Activated naive CD4-positive, alpha-beta T cell treated with anti-CD3 and anti-CD28 coated beads for 36 hours (primary cell): ENCODE measurements at regions of chr7 and their contacts with region 1.

Region 1: GRCh38 chr7:129952653-129953560 is at the start of gene UBE2H:
- DNase-seq: peak; percentile 91
- H3K4me3 Mint-ChIP-seq: peak within 1 kb of the TSS; percentile 99
- H3K27ac Mint-ChIP-seq: peak within 1 kb of the TSS; percentile 96
- H3K4me1 Mint-ChIP-seq: peaks cover 4% of the 10 kb centered on the region
- H3K27me3 Mint-ChIP-seq: no peaks in the 10 kb centered on the region
- total RNA-seq, gene UBE2H: 33.4 to 37.6 TPM

Region 2: DNA sequence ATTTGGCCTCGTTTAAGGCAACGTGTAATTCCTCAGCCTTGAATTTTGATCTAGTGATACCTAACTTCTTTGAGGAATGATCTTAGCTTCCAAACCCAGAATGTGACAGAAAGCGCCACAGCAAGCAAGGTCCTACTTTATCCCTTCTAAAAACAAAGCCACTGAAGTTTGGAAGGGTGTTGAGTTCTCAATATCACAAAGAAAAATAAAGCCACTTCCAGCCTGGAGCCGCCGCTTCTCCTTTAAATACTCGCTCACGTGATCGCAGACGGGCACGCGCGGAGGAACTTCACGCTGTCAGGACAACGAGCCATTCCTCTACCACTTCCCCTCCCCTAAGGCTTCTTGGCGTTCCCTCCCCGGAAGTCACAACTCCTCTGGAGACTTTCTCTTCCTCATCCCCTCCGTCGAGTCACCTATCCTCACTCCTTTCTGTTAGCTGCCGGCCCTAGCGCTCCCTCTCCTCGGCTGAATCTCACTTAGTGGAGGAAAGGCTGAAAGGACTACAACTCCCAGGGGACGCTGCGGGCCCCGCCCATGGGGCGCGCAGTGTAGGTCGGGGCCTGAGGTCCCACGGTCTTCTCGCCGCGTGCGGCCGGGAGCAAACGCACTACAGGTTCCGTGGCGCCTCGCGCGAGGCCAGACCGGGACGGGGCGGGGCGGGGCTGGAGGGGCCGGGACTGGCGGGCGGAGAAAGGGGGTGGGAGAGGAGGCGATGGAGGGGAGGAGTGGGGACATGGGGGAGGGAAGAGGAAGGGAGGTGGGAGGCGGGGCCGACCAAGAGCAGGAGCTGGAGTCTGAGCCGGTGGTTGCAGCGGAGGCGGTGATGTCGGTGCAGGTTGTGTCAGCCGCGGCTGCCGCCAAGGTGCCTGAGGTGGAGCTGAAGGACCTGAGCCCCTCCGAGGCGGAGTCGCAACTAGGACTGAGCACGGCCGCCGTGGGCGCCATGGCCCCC is 728.4 kb before region 1 on chr7 and contains the start of gene AHCYL2:
- CTCF ChIA-PET with region 1: no interaction called
- intact Hi-C with region 1: loop called (anchors 1 kb)
- DNase-seq: peak; percentile 99
- H3K4me3 Mint-ChIP-seq: peak within 1 kb of the TSS; percentile 88
- H3K27ac Mint-ChIP-seq: peak within 1 kb of the TSS; percentile 90
- H3K4me1 Mint-ChIP-seq: peaks cover 31% of the 10 kb centered on the region
- H3K27me3 Mint-ChIP-seq: no peaks in the 10 kb centered on the region
- total RNA-seq, gene AHCYL2: 29.1 to 30.4 TPM

Region 3: DNA sequence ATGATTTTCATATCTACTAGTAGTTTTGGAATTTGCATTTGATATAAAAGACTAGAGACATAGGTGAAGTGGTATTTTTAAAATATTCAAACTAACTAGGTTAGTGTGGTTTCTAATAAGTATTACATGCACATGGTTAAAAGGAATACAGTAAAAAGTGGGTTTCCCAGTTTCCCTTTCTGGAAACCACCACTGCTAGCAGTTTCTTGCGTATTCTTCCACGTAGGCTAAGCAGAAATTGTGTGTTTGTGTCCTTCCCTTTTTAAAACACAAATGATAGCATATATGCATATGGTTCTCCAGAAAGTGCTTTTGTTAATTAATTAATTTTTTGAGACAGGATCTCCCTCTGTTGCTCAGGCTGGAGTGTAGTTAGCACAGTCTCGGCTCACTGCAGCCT is 326.0 kb before region 1 on chr7:
- CTCF ChIA-PET with region 1: no interaction called
- intact Hi-C with region 1: no loop called
- DNase-seq: no peak
- H3K4me3 Mint-ChIP-seq: no peak overlapping the region
- H3K27ac Mint-ChIP-seq: no peak overlapping the region
- H3K4me1 Mint-ChIP-seq: peaks cover 42% of the 10 kb centered on the region
- H3K27me3 Mint-ChIP-seq: no peaks in the 10 kb centered on the region

Region 4: GRCh38 chr7:129780257-129780973 is 172.5 kb before region 1 on chr7:
- CTCF ChIA-PET with region 1: no interaction called
- intact Hi-C with region 1: loop called (anchors 1 kb)
- DNase-seq: peak; percentile 91
- H3K4me3 Mint-ChIP-seq: peak overlapping the region; percentile 73
- H3K27ac Mint-ChIP-seq: no peak overlapping the region
- H3K4me1 Mint-ChIP-seq: peaks cover 40% of the 10 kb centered on the region
- H3K27me3 Mint-ChIP-seq: peaks cover 57% of the 10 kb centered on the region

Region 5: DNA sequence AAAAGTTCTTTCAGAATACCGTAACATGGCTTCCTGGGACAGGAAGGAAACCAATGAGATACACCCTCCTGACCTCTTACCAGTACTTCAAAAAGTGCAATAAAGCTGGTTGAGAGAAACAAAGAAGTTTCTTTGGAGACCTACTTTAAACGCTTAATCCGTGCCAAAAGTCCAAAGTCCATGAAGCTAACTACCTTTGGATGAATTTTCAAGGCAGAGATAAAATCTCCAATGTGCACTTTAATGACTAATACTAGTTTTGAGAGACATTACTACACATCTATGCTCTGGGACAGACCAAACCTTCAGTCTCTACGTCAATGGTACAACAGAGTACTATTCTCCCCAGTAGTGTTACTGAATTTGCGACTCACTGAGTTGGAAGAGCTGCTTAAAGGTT is 46.2 kb before region 1 on chr7:
- CTCF ChIA-PET with region 1: no interaction called
- intact Hi-C with region 1: loop called (anchors 1 kb)
- DNase-seq: no peak
- H3K4me3 Mint-ChIP-seq: no peak overlapping the region
- H3K27ac Mint-ChIP-seq: peak overlapping the region; percentile 76
- H3K4me1 Mint-ChIP-seq: peaks cover 75% of the 10 kb centered on the region
- H3K27me3 Mint-ChIP-seq: no peaks in the 10 kb centered on the region

Region 6: DNA sequence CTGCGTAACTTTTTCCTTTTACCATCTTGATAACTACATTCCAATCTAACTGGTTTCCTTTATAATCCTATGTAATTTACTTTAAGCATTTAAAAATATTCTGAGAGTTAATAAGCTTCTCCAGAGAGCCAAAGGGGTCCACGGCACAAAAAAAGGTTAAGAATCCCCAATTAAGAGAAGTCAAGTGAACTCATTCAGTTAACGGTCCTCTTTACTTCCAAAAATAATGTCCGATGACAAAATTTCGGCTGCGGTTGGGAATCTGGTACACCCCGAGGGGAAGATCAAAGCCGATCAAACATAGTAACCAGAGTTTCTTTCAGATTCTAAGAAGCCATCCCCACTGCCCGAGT is 97.8 kb after region 1 on chr7:
- CTCF ChIA-PET with region 1: no interaction called
- intact Hi-C with region 1: loop called (anchors 2 kb)
- DNase-seq: no peak
- H3K4me3 Mint-ChIP-seq: peak overlapping the region; percentile 98
- H3K27ac Mint-ChIP-seq: peak overlapping the region; percentile 92
- H3K4me1 Mint-ChIP-seq: peaks cover 16% of the 10 kb centered on the region
- H3K27me3 Mint-ChIP-seq: no peaks in the 10 kb centered on the region

Region 7: DNA sequence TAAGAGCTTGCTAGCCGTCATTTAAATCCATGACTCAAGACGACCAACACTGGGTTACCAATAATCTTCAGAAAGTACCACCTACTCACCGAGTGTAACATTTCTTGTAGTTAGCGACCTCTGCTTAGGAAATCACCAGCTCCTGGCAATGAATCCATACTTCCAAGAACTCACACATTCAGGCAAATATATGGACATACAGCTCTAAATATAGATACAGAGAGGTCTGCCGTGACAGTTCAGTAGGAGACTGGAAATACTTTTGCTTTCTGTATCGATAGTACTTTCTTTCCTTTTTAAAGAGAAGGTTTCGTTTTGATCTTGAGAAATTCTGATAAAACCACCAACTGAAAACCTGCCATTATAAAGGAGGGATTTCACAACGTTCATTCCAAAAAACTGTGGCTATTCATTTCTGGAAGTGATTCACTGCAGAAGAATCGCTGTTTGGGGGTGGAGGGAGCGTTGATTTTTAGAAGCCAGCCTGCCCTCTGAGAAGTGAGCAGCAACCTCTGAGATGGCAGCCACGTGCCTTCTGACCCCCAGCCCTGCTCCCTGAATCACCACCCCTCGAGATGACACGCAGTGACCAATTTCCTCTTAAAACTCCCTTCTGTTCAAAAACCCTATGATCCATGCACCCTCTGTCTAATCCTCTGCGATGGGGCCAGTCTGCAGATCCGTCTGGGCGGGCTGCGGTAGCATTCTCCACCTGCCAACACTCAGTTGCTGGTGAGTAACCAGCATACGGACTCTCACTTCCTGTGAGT is 960.1 kb after region 1 on chr7:
- CTCF ChIA-PET with region 1: no interaction called
- intact Hi-C with region 1: loop called (anchors 5 kb)
- DNase-seq: peak; percentile 92
- H3K4me3 Mint-ChIP-seq: peak overlapping the region; percentile 81
- H3K27ac Mint-ChIP-seq: peak overlapping the region; percentile 97
- H3K4me1 Mint-ChIP-seq: peaks cover 91% of the 10 kb centered on the region
- H3K27me3 Mint-ChIP-seq: no peaks in the 10 kb centered on the region